ENCODE measurements at regions of chr2 and their contacts with region 1.

Region 1: DNA sequence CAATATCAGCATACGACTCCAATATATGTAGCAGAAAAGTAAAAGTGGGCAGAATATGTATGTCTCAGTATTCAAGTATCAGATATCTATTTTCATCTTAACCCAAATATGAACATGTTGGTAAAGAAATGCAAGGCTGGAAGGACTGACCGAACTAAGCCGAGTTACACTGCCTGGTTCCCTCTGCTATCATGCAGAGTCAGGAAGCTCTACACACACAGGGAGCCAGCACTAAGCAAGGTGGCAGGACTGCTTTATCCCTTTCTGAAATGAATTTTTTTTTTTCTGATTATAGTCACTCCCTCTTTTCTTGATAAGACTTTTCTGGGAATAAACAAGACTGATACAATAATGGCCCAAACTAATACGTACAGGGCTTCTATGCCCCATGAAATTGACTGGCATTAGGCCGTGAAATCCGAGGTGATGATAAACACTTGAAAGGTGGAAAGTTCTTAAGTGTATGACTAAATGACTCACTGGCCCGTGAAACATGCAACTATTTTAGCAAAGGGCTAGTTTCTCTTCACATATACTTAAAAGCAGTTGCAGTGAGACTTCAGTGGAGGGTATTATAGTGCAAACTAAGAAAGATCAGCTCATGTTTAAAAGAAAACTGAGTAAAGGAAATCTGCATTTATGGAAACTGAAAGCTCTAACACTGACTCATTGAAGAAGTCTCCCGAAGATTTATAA is 14.9 kb downstream of the DPP4 start:
- DNase-seq: no peak
- ATAC-seq: no peak
- H3K4me3 Mint-ChIP-seq: peak overlapping the region in 6 of 10 donors; percentile 9 to 78 (median 48)
- H3K27ac Mint-ChIP-seq: peak overlapping the region in 8 of 10 donors; percentile 2 to 86 (median 66)
- H3K4me1 Mint-ChIP-seq: peaks cover 31 to 79% (median 67%) of the 10 kb centered on the region in 4 donors
- H3K27me3 Mint-ChIP-seq: no peaks in the 10 kb centered on the region

Region 2: DNA sequence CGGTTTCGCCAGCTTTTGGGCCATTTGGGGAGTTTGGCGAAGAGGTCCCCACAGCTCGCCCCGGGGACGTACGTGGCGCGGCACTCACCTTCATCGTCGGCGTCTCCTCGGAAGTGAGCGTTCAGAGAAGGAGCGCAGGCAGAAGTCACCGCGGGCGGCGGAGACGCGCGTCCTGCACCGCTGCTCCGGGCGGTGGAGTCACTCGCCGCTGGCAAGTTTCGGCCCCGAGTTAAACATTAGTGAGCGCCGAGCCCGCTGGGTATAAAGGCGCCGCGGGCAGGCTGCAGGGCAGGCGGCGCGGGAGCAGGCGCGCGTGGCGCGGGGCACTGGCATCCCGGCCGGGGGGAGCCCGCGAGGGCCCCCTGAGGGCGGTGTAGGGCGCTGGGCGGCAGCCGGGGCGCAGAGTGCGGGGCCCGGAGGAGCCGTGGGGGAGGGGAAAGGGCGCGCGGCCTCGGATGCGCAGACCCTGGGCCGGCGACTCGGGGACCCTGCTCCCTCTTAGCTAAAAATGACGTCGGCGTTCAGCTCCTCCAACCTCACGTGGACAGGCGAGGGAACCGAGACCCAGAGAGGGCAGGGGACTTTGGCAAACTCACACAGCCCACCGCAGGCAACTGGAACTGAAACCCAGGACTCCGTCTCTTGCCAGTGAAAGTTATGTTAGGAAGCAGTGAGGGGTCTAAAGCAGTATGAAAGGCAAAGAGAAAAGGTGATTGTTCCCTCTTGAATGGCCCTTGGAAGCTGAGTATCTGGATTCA is 14.9 kb after region 1 on chr2 and contains the start of gene DPP4:
- POLR2A ChIA-PET with region 1: interaction called, 31 read pairs
- DNase-seq: peak; percentile 21 to 74 (median 55)
- ATAC-seq: peak; percentile 87 to 89
- H3K4me3 Mint-ChIP-seq: peak within 1 kb of the TSS; percentile 90 to 100 (median 96)
- H3K27ac Mint-ChIP-seq: peak within 1 kb of the TSS; percentile 82 to 99 (median 94)
- H3K4me1 Mint-ChIP-seq: peaks cover 30 to 50% (median 46%) of the 10 kb centered on the region in 4 donors
- H3K27me3 Mint-ChIP-seq: peaks cover 0 to 2% (median 0%) of the 10 kb centered on the region in 5 donors
- polyA plus RNA-seq, gene DPP4: 13.3 to 49.6 (median 44.4) TPM

Region 3: DNA sequence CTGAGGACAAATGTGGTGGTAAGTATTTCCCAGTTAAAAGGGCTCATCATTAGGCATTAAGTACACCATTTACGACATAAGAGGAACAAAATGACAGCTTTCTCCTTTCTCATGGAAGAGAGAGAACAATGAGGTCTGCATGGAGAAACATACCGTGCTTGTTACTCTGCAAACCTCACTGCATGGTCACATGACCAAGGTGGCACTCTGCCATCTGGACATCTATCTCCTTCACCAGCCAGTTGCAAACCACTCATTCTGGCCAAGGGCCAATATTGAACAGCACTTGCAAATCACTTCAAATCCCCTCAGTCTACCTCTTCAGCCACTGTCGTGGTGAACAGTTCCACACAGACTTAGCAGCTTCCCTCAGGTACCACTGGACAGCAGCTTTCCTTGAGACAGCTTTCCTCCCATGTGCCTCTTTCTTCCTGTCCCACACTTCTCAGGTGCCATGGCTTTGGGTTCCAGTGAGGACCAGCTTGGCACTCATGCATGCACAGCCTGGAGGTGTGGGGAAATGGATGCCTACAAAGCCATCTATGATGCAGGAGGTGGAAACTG is 44.4 kb after region 1 on chr2:
- POLR2A ChIA-PET with region 1: no interaction called
- DNase-seq: no peak
- ATAC-seq: no peak
- H3K4me3 Mint-ChIP-seq: no peak overlapping the region
- H3K27ac Mint-ChIP-seq: no peak overlapping the region
- H3K4me1 Mint-ChIP-seq: peaks cover 0 to 4% (median 0%) of the 10 kb centered on the region in 4 donors
- H3K27me3 Mint-ChIP-seq: no peaks in the 10 kb centered on the region

Measured in naive thymus-derived CD8-positive, alpha-beta T cell (primary cell).